Astrocyte of the cerebellum (primary cell): ENCODE measurements at regions of chr19 and their contacts with region 1.

Region 1: GRCh38 chr19:3324321-3324856 is 42.0 kb upstream of the NFIC start:
- DNase-seq: no peak
- H3K4me3 ChIP-seq: no peak overlapping the region
- CTCF ChIP-seq: peak; percentile 72

Region 2: DNA sequence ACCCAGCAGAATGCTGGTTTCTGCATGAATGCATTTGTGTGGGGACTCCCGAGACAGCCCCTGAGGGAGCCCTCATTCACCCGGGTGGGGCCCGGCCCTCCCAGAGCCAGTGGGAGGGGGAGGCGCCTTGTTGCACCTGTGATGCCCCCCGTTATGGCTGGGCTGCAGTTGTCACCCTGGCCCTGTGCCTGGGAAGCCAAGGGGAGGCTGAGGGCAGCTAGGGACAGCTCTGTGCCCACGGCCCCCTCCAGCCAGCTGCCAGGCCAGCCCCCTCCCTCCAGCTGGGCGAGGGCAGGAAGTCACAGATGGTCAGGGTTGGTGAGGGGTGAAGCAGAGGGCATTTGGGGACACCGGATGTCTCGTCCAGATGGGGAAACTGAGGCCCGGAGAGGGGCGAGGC is 68.1 kb after region 1 on chr19:
- in situ Hi-C with region 1: no loop called
- DNase-seq: no peak
- H3K4me3 ChIP-seq: no peak overlapping the region
- CTCF ChIP-seq: no peak

Region 3: DNA sequence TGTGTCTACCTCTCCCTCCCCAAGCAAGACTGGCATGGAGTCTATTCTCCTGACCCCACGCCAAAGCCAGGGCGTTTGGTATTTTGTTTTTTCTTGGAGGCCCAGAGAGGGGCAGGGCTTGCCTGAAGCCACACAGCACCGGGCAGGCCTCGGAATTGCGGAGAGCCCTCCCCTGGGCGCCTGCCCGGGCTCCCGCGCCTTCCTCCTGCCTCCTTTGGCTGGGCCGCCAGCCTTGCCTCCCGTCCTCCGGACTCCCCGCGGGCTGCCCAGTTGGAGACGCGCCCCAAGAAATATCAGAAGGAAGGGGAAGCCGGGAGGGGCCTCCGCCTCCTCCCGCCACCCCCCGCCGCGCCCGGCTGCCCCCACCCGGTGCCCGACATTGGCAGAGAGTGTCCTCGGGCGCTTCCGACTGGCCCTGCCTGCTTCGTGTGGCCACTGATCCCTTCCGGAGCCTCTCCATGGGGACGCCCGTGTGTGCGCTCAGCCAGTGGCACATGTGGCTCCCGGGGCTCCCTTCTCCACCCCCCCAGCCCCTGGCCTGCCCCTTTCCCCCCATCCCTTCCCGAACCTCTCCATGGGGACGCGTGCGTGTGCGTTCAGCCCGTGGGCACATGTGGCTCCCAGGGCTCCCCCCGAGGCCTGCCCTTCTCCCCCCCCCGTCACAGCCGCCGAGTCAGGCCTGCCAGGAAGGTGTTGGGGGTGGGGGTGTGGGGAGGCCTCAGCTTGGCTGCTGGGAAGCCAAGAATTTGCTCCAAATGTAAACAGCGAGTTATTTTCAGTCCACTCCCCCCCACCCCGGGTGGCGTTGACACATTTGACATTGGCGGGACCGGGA is 79.3 kb after region 1 on chr19:
- in situ Hi-C with region 1: loop called (anchors 10 kb)
- DNase-seq: peak; percentile 84
- H3K4me3 ChIP-seq: peak overlapping the region; percentile 11
- CTCF ChIP-seq: no peak

Region 4: DNA sequence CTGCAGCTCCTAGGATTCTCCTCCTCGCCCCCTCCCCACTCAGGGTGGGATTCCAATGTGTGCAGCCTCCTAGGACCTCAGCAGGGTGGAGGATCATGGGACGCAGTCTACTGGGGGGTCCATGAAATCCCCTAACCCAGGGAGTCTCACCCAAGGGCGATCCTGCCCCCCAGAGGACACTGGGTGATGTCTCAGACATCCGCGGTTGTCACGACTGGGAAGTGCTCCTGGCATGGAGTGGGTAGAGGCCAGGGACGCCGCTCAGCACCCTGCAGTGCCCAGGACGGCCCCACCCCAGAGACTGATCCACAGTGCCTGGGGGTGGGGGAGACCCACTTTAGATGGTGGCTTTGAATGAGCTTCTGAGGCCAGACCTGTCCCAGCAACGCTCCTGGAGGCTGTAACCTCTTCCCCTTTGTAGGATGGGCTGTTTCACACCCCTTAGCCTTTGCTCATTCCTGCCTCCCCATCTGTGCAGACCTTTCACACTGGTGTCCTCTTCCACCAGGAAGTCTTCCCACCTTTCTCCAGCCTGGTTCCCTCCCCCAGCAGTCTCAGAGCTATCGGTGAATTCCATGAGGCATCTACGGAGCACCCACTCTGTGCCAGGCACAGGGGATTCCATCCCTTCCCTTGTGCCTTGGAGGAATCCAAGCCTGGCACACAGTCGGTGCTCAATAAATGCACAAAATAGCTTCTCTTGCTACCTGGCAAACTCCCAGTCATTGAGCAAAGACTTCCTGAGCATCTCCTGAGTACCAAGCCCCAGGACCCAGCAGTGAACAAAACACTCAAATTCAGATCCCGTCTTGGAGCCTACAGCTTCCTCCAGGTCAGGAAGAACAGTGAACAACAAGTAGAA is 145.5 kb after region 1 on chr19:
- in situ Hi-C with region 1: loop called (anchors 10 kb)
- DNase-seq: no peak
- H3K4me3 ChIP-seq: no peak overlapping the region
- CTCF ChIP-seq: no peak